Kidney (tissue), 22 donors: ENCODE measurements at regions of chr1 and their contacts with region 1.

Region 1: DNA sequence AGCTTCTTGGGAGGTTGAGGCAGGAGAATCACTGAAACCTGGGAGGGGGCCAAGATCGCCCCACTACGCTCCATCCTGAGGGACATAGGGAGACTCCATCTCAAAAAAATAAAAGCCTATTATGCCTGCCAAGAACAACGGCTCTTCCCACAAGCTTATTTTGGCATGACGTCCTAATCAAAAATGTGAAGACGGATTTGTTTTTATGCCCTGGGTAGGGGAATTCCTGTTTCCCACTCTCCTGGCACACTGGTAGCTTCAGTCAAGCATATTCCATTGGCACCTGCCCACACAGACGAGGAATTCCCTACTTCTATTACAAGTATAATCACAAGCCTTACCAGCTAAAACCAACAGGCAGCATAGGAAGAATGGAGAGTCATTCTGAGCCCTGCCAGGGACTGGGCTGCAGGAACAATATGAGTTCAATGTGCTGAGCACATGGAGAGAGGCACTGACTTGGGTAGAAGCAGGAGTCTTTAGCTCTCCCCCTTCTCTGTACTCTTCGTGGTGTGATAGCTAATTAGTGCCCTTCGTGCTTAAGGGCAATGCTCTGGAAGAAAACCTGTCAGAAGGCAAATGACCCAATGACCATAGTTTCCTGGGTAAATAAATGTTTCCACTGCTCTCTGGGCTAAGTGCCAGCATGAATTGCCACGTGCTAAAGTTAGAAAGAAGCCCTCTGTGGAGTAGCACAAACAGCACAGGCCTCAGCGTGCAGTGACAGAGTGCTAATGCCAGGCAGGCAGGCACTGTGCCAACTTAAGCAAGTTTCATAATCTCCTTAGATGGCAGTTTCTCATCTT is 16.8 kb downstream of the TNFSF4 start:
- DNase-seq: peak in 4 of 5 donors; percentile 27 to 91 (median 70)
- H3K4me3 ChIP-seq: peak overlapping the region in 1 of 3 donors; percentile 19
- H3K27ac ChIP-seq: peak overlapping the region; percentile 82 to 91
- H3K4me1 ChIP-seq: peaks cover 0 to 8% (median 8%) of the 10 kb centered on the region in 3 donors
- H3K27me3 ChIP-seq: no peaks in the 10 kb centered on the region
- CTCF ChIP-seq: no peak

Region 2: GRCh38 chr1:172745014-172745413 is 445.3 kb before region 1 on chr1:
- intact Hi-C with region 1: loop called (anchors 10 kb)
- DNase-seq: peak in 3 of 5 donors; percentile 18 to 71 (median 53)
- H3K4me3 ChIP-seq: no peak overlapping the region
- H3K27ac ChIP-seq: no peak overlapping the region
- H3K4me1 ChIP-seq: no peaks in the 10 kb centered on the region
- H3K27me3 ChIP-seq: no peaks in the 10 kb centered on the region
- CTCF ChIP-seq: peak; percentile 58

Region 3: GRCh38 chr1:172818841-172819527 is 371.3 kb before region 1 on chr1:
- intact Hi-C with region 1: loop called (anchors 10 kb)
- DNase-seq: peak in 2 of 5 donors; percentile 18 to 28
- H3K4me3 ChIP-seq: no peak overlapping the region
- H3K27ac ChIP-seq: no peak overlapping the region
- H3K4me1 ChIP-seq: no peaks in the 10 kb centered on the region
- H3K27me3 ChIP-seq: no peaks in the 10 kb centered on the region
- CTCF ChIP-seq: no peak

Region 4: GRCh38 chr1:173112129-173112528 is 78.2 kb before region 1 on chr1:
- intact Hi-C with region 1: no loop called
- DNase-seq: no peak
- H3K4me3 ChIP-seq: no peak overlapping the region
- H3K27ac ChIP-seq: no peak overlapping the region
- H3K4me1 ChIP-seq: no peaks in the 10 kb centered on the region
- H3K27me3 ChIP-seq: no peaks in the 10 kb centered on the region
- CTCF ChIP-seq: no peak